ENCODE measurements at regions of chr19 and their contacts with region 1.

Region 1: GRCh38 chr19:52962394-52963246 is at the start of gene ZNF816:
- DNase-seq: peak; percentile 96
- ATAC-seq: peak; percentile 100
- H3K4me3 ChIP-seq: peak within 1 kb of the TSS; percentile 72 to 92 (median 80)
- H3K4me3 Mint-ChIP-seq: peak within 1 kb of the TSS; percentile 92
- H3K27ac ChIP-seq: peak within 1 kb of the TSS; percentile 50 to 69
- H3K27ac Mint-ChIP-seq: peak within 1 kb of the TSS; percentile 92
- H3K4me1 ChIP-seq: peaks cover 14 to 19% of the 10 kb centered on the region in 2 donors
- H3K4me1 Mint-ChIP-seq: peaks cover 32% of the 10 kb centered on the region
- H3K27me3 ChIP-seq: no peaks in the 10 kb centered on the region
- H3K27me3 Mint-ChIP-seq: no peaks in the 10 kb centered on the region
- CTCF ChIP-seq: no peak
- total RNA-seq, gene ZNF816: 22.3 and 25.0 TPM in 2 replicates

Region 2: DNA sequence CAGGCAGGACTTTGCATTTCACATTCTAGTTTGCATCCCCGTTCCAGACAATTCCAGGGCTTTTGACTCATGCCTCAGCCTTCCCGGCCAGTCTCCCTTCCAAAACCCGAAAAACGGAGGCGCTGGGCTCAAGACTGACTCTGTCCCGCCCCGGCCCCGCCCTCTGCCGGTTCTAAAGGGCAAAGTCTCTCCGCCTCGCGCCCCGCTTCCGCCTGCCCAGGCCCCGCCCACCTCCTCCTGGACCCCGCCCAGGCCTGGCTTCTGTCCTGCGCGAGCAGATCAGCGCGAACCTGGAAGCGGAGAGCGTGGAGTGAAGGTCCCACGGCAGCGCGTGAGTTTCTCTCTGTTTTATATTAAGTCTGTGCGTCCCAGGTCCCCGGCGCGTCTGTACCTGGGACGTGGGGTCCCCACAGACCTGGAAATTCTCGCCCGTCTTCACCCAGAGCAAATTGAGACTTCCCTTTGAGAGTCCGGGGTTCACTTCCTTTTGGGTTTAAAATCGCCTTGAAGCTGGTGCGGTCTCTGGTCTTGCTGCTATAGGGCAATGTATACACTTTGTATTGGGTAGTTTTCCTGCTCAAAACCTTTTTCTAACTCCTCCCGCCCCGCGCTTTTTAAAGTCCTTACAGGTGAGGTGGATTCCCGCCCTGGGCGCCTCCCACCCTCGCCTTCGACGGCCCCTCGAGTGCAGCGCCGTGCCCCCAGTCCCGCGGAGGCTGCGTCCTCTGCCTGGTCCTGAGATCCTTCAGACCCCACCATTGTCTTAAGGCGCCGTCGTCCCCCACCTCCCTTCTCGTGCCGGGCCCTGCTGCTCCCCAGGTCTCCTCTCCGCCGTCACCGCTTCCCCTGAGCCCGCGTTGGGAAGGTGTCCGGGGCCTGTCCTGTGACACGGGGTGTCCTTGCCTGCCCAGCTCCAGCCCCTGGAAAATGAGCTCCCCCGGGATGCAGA is 361.3 kb before region 1 on chr19:
- CTCF ChIA-PET with region 1: no interaction called
- POLR2A ChIA-PET with region 1: no interaction called
- intact Hi-C with region 1: loop called (anchors 1 kb)
- DNase-seq: peak; percentile 92
- ATAC-seq: peak; percentile 99
- H3K4me3 ChIP-seq: peak overlapping the region; percentile 59 to 89 (median 82)
- H3K4me3 Mint-ChIP-seq: peak overlapping the region; percentile 90
- H3K27ac ChIP-seq: peak overlapping the region; percentile 43 to 62
- H3K27ac Mint-ChIP-seq: peak overlapping the region; percentile 87
- H3K4me1 ChIP-seq: peaks cover 11 to 16% of the 10 kb centered on the region in 2 donors
- H3K4me1 Mint-ChIP-seq: peaks cover 25% of the 10 kb centered on the region
- H3K27me3 ChIP-seq: no peaks in the 10 kb centered on the region
- H3K27me3 Mint-ChIP-seq: no peaks in the 10 kb centered on the region
- CTCF ChIP-seq: peak; percentile 61

Region 3: GRCh38 chr19:52786457-52787359 is 175.9 kb before region 1 on chr19 and contains the start of gene ZNF600:
- CTCF ChIA-PET with region 1: no interaction called
- POLR2A ChIA-PET with region 1: no interaction called
- intact Hi-C with region 1: loop called (anchors 1 kb)
- DNase-seq: peak; percentile 83
- ATAC-seq: peak; percentile 99
- H3K4me3 ChIP-seq: peak within 1 kb of the TSS; percentile 63 to 96 (median 78)
- H3K4me3 Mint-ChIP-seq: peak within 1 kb of the TSS; percentile 97
- H3K27ac ChIP-seq: peak within 1 kb of the TSS; percentile 40 to 69
- H3K27ac Mint-ChIP-seq: peak within 1 kb of the TSS; percentile 92
- H3K4me1 ChIP-seq: peaks cover 4 to 18% of the 10 kb centered on the region in 2 donors
- H3K4me1 Mint-ChIP-seq: peaks cover 31% of the 10 kb centered on the region
- H3K27me3 ChIP-seq: no peaks in the 10 kb centered on the region
- H3K27me3 Mint-ChIP-seq: no peaks in the 10 kb centered on the region
- CTCF ChIP-seq: peak; percentile 21
- total RNA-seq, gene ZNF600: 41.7 and 51.6 TPM in 2 replicates

Region 4: DNA sequence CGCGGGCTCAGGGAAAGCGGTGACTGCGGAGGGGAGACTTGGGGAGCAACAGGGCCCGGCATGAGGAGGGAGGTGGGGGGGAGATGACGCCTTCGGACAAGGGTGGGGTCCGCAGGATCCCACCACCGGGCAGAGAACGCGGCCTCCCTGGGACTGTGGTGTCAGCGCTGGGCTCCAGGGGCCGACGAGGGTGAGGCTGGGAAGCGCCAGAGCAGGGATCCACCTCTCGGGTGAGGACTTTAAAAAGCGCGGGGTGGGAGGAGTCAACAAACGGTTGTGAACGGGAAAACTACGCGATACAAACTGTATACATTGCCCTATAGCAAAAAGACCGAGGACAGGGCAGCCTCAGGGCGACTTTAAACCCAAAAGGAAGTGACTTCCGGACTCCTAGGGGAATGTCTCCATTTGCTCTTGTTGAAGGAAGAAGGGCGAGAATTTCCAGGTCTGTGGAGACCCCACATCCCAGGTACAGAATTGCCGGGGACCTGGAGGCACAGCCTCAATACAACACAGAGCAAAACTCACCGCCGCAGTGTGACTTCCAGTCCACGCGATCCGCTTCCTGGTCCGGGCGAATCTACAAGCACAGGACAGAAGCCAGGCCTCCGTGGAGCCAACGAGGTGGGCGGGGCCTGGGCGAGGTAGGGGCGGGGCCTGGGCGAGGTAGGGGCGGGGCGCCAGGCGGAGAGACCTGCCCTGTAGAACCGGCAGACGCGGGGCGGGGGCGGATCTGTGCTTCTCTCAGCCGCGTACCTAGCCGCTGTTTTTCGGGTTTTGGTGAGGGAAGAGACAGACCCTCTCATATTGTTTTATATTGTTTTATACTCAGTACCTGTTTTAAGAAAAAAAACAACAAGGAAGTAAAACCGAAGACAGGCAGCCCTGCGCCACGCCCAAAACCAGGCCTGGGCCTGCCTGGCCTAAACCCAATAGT is 39.5 kb before region 1 on chr19 and contains the start of gene ZNF888:
- CTCF ChIA-PET with region 1: no interaction called
- POLR2A ChIA-PET with region 1: no interaction called
- intact Hi-C with region 1: loop called (anchors 2 kb)
- DNase-seq: peak; percentile 89
- ATAC-seq: peak; percentile 100
- H3K4me3 ChIP-seq: peak within 1 kb of the TSS; percentile 82 to 97 (median 88)
- H3K4me3 Mint-ChIP-seq: peak within 1 kb of the TSS; percentile 97
- H3K27ac ChIP-seq: peak within 1 kb of the TSS; percentile 66 to 84
- H3K27ac Mint-ChIP-seq: peak within 1 kb of the TSS; percentile 93
- H3K4me1 ChIP-seq: peaks cover 11 to 18% of the 10 kb centered on the region in 2 donors
- H3K4me1 Mint-ChIP-seq: peaks cover 28% of the 10 kb centered on the region
- H3K27me3 ChIP-seq: no peaks in the 10 kb centered on the region
- H3K27me3 Mint-ChIP-seq: no peaks in the 10 kb centered on the region
- CTCF ChIP-seq: no peak
- total RNA-seq, gene ZNF888: 15.3 and 15.6 TPM in 2 replicates

Region 5: DNA sequence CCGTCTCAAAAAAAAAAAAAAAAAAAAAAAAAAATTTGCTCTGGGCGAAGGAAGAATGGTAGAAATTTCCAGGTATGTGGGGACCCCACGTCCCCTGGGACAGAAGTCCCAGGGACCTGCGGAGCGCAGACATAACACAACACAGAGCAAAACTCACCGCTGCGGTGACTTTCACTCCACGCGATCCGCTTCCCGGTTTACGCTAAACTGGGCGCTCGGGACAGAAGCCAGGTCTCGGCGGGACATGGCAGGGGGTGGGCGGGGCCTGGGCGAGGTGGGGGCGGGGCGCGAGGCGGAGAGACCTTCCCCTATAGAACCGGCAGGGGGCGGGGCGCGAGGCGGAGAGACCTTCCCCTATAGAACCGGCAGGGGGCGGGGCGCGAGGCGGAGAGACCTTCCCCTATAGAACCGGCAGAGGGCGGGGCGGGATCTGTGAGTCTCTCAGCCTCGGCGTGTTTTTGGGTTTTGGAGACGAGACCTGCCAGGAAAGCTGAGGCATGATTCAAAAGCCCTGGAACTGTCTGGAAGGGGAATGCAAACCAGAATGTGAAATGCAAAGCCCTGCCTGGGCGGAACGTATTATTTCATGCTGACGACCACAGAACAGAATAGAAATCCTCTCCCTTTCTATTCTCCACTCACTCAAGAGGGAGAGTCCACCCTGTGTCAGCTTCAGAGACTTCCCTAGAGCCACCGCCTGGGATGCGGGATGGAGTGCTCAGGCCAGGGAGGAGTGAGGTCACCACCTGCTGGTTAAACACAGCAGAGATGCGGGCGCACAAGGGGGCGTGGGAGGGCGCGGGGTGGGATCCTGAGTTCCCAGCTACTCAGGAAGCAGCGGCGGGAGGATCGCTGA is 30.9 kb after region 1 on chr19:
- CTCF ChIA-PET with region 1: interaction called, 3 read pairs
- POLR2A ChIA-PET with region 1: no interaction called
- intact Hi-C with region 1: loop called (anchors 1 kb)
- DNase-seq: peak; percentile 73
- ATAC-seq: peak; percentile 99
- H3K4me3 ChIP-seq: peak overlapping the region in 4 of 5 experiments; percentile 33 to 64 (median 54)
- H3K4me3 Mint-ChIP-seq: peak overlapping the region; percentile 89
- H3K27ac ChIP-seq: no peak overlapping the region
- H3K27ac Mint-ChIP-seq: peak overlapping the region; percentile 61
- H3K4me1 ChIP-seq: peaks cover 8 to 14% of the 10 kb centered on the region in 2 donors
- H3K4me1 Mint-ChIP-seq: peaks cover 14% of the 10 kb centered on the region
- H3K27me3 ChIP-seq: peaks cover 0 to 10% (median 1%) of the 10 kb centered on the region in 4 experiments
- H3K27me3 Mint-ChIP-seq: peaks cover 12% of the 10 kb centered on the region
- CTCF ChIP-seq: peak; percentile 85